Activated CD4-positive, alpha-beta memory T cell treated with anti-CD3 and anti-CD28 coated beads for 36 hours (primary cell): ENCODE measurements at regions of chr2 and their contacts with region 1.

Region 1: DNA sequence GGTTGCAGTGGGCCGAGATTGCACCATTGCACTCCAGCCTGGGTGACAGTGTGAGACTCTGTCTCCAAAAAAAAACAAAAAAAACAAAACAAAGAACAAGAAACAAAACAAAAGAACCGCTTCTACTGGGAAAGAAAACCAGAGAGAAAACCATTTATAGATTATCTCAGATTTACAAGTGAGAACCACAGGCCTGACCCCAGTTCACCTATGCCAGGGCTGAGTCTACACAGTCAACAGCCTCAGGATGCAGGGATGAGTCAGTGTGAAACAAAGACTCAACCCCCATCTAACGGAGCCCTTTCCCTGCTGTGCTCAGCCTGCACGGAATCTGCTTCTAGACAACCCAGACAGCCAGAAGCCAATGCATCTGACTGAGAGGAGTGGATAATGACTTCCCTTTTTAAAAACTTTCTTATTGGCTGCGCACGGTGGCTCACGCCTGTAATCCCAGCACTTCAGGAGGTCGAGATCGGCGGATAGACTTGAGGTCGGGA is 25.5 kb upstream of the YWHAQ start:
- DNase-seq: peak; percentile 90
- H3K4me3 Mint-ChIP-seq: peak overlapping the region; percentile 40
- H3K27ac Mint-ChIP-seq: peak overlapping the region; percentile 94
- H3K4me1 Mint-ChIP-seq: peaks cover 43% of the 10 kb centered on the region
- H3K27me3 Mint-ChIP-seq: peaks cover 9% of the 10 kb centered on the region

Region 2: GRCh38 chr2:9594366-9595054 is 61.8 kb before region 1 on chr2:
- CTCF ChIA-PET with region 1: interaction called, 4 read pairs
- POLR2A ChIA-PET with region 1: interaction called, 4 read pairs
- intact Hi-C with region 1: loop called (anchors 1 kb)
- DNase-seq: no peak
- H3K4me3 Mint-ChIP-seq: no peak overlapping the region
- H3K27ac Mint-ChIP-seq: peak overlapping the region; percentile 83
- H3K4me1 Mint-ChIP-seq: peaks cover 81% of the 10 kb centered on the region
- H3K27me3 Mint-ChIP-seq: no peaks in the 10 kb centered on the region

Region 3: GRCh38 chr2:9641641-9642040 is 14.7 kb before region 1 on chr2:
- CTCF ChIA-PET with region 1: no interaction called
- POLR2A ChIA-PET with region 1: interaction called, 6 read pairs
- intact Hi-C with region 1: loop called (anchors 1 kb)
- DNase-seq: peak; percentile 76
- H3K4me3 Mint-ChIP-seq: peak overlapping the region; percentile 52
- H3K27ac Mint-ChIP-seq: peak overlapping the region; percentile 64
- H3K4me1 Mint-ChIP-seq: peaks cover 31% of the 10 kb centered on the region
- H3K27me3 Mint-ChIP-seq: no peaks in the 10 kb centered on the region

Region 4: GRCh38 chr2:9668722-9669340 is 12.5 kb after region 1 on chr2:
- CTCF ChIA-PET with region 1: no interaction called
- POLR2A ChIA-PET with region 1: no interaction called
- intact Hi-C with region 1: no loop called
- DNase-seq: no peak
- H3K4me3 Mint-ChIP-seq: no peak overlapping the region
- H3K27ac Mint-ChIP-seq: no peak overlapping the region
- H3K4me1 Mint-ChIP-seq: peaks cover 7% of the 10 kb centered on the region
- H3K27me3 Mint-ChIP-seq: no peaks in the 10 kb centered on the region

Region 5: GRCh38 chr2:9708683-9709538 is 52.6 kb after region 1 on chr2:
- CTCF ChIA-PET with region 1: interaction called, 12 read pairs
- POLR2A ChIA-PET with region 1: interaction called, 17 read pairs
- intact Hi-C with region 1: loop called (anchors 1 kb)
- DNase-seq: peak; percentile 80
- H3K4me3 Mint-ChIP-seq: no peak overlapping the region
- H3K27ac Mint-ChIP-seq: peak overlapping the region; percentile 93
- H3K4me1 Mint-ChIP-seq: peaks cover 63% of the 10 kb centered on the region
- H3K27me3 Mint-ChIP-seq: no peaks in the 10 kb centered on the region